ENCODE measurements at regions of chr1 and their contacts with region 1.

Region 1: GRCh38 chr1:32335790-32336590 is at the start of gene MARCKSL1:
- DNase-seq: peak; percentile 85 to 90
- ATAC-seq: peak; percentile 54 to 66 (median 62)
- H3K4me3 ChIP-seq: peak within 1 kb of the TSS; percentile 36
- H3K4me3 Mint-ChIP-seq: peak within 1 kb of the TSS; percentile 88
- H3K27ac ChIP-seq: no peak within 1 kb of the TSS
- H3K27ac Mint-ChIP-seq: peak within 1 kb of the TSS; percentile 43 to 87
- H3K4me1 ChIP-seq: peaks cover 48% of the 10 kb centered on the region
- H3K4me1 Mint-ChIP-seq: peaks cover 24 to 49% of the 10 kb centered on the region in 2 donors
- H3K27me3 ChIP-seq: no peaks in the 10 kb centered on the region
- H3K27me3 Mint-ChIP-seq: peaks cover 0 to 3% of the 10 kb centered on the region in 2 donors
- CTCF ChIP-seq: no peak
- total RNA-seq, gene MARCKSL1: 21.7 to 26.1 (median 21.8) TPM

Region 2: GRCh38 chr1:32221980-32222755 is 113.8 kb before region 1 on chr1 and contains the starts of genes EIF3I and TMEM234:
- intact Hi-C with region 1: loop called (anchors 5 kb)
- DNase-seq: peak; percentile 86 to 97
- ATAC-seq: peak; percentile 89 to 96 (median 93)
- H3K4me3 ChIP-seq: peak within 1 kb of the TSS; percentile 54
- H3K4me3 Mint-ChIP-seq: peak within 1 kb of the TSS; percentile 92
- H3K27ac ChIP-seq: peak within 1 kb of the TSS; percentile 82
- H3K27ac Mint-ChIP-seq: peak within 1 kb of the TSS; percentile 92 to 96
- H3K4me1 ChIP-seq: peaks cover 30% of the 10 kb centered on the region
- H3K4me1 Mint-ChIP-seq: peaks cover 20 to 29% of the 10 kb centered on the region in 2 donors
- H3K27me3 ChIP-seq: no peaks in the 10 kb centered on the region
- H3K27me3 Mint-ChIP-seq: no peaks in the 10 kb centered on the region
- CTCF ChIP-seq: no peak
- total RNA-seq, gene EIF3I: 107 to 126 (median 110) TPM
- total RNA-seq, gene TMEM234: 22.2 to 27.1 (median 24.7) TPM

Region 3: DNA sequence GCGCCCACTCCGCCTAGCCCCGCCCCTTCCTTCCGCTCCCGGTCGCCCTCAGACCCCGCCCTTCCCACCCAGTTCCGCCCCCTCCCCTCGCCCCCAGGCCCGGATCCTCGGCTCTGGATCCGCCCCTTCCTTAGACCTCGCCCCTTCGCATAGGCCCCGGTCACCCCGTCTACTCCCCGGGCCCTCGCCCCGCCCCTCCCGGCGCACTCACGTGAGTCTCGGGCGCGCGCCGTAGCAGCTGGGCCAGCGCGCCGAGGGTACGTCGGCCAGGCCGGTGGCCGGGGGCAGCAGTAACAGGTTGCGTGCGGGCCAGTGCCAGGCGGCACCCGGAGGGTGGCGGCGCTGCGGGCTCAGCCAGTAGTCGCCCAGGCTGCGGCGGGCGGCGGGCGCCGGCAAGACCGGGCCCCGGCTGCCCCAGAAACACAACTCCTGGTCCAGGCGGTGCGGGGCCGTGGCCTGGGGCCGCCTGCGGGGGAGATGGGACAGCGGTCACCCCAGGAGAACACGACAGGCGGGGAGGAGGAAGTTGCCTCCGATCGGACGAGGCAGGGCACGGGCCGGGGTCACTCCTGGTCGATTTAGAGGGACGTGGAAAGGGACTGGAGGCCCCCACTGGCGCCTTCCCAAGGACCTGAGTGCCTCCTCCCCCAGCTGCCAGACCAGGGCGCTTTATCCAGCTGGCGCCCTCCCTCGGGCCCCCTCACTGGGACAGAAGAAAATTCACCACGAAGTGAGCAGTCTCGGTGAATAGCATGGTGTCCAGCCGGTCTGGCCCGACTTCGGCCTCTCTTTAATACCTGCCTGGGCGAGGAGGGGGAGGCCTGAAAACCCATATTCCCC is 15.6 kb after region 1 on chr1:
- intact Hi-C with region 1: loop called (anchors 1 kb)
- DNase-seq: peak; percentile 88 to 97
- ATAC-seq: peak; percentile 93 to 97 (median 94)
- H3K4me3 ChIP-seq: peak overlapping the region; percentile 47
- H3K4me3 Mint-ChIP-seq: peak overlapping the region; percentile 76
- H3K27ac ChIP-seq: peak overlapping the region; percentile 66
- H3K27ac Mint-ChIP-seq: peak overlapping the region; percentile 64 to 72
- H3K4me1 ChIP-seq: peaks cover 39% of the 10 kb centered on the region
- H3K4me1 Mint-ChIP-seq: peaks cover 28 to 50% of the 10 kb centered on the region in 2 donors
- H3K27me3 ChIP-seq: no peaks in the 10 kb centered on the region
- H3K27me3 Mint-ChIP-seq: no peaks in the 10 kb centered on the region
- CTCF ChIP-seq: peak; percentile 0

Region 4: DNA sequence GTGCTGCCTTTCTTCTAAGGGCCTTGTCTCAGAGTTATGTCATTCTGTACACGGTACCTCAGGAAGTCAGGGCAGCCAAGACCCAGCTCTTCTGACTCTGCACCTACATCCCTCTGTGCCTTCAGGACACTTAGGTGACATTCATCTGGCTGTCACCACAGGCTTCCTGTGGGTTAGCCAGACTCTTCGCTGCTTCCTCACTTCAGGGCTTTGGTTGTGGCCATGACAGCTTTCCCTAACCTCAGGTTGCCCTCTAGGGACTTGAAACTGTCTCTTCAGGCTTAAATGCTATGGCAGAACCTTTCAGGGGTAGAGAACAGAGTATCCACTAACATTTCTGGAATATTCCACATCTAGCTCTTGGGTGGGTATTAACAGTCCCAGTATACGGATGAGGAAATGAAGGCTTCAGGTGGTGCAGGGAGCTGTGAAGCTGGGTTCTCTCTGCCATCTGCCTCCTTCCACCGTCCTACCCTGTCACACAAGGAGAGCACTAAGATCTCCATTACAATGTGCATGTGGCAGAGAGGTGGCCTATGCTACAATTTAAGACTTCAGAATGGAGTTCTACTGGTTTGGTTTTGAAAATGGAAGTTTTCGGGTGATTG is 36.3 kb after region 1 on chr1:
- intact Hi-C with region 1: loop called (anchors 1 kb)
- DNase-seq: peak in 1 of 2 donors; percentile 85
- ATAC-seq: peak; percentile 68 to 71 (median 70)
- H3K4me3 ChIP-seq: no peak overlapping the region
- H3K4me3 Mint-ChIP-seq: no peak overlapping the region
- H3K27ac ChIP-seq: no peak overlapping the region
- H3K27ac Mint-ChIP-seq: peak overlapping the region; percentile 68 to 77
- H3K4me1 ChIP-seq: peaks cover 13% of the 10 kb centered on the region
- H3K4me1 Mint-ChIP-seq: peaks cover 12 to 22% of the 10 kb centered on the region in 2 donors
- H3K27me3 ChIP-seq: no peaks in the 10 kb centered on the region
- H3K27me3 Mint-ChIP-seq: no peaks in the 10 kb centered on the region
- CTCF ChIP-seq: no peak

Region 5: DNA sequence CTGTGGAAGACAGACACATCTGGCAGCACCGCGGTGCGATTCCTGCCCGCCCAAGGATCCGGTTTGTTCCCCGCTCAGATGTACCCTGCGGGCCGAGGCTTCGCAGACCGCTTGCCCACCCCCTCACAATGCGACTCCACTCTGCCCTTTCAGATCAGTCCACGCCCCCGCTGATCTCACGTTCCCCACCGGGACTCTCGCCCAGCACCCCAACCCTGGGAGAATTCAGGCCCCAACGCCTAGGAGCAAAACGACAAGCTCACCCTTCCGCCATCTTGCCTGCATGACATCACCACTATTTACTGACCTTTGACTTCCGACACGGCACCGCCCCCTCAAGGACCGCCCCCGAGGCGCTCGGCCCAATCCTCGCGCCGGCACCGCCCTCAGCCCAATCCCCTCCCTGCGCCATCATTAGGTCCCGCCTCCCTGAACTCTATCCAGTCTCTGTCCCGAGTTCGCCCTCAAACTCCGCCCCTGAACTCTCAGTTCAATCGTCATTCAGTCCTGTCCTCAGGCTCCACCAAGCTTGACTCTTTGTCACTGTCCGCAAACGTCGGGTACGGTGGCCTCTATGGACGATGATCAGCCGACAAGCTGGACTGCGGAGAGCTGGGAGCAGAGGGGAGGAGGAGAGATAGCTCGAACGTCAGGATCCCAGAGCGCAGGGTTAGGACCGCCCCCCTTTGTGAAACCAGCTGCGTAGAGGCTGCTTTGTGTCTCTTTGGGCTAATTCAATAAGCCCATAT is 58.3 kb after region 1 on chr1 and contains the start of gene BSDC1:
- intact Hi-C with region 1: loop called (anchors 2 kb)
- DNase-seq: peak; percentile 98 to 99
- ATAC-seq: peak; percentile 96 to 100 (median 97)
- H3K4me3 ChIP-seq: peak within 1 kb of the TSS; percentile 76
- H3K4me3 Mint-ChIP-seq: peak within 1 kb of the TSS; percentile 100
- H3K27ac ChIP-seq: peak within 1 kb of the TSS; percentile 91
- H3K27ac Mint-ChIP-seq: peak within 1 kb of the TSS; percentile 97 to 98
- H3K4me1 ChIP-seq: peaks cover 16% of the 10 kb centered on the region
- H3K4me1 Mint-ChIP-seq: peaks cover 21 to 22% of the 10 kb centered on the region in 2 donors
- H3K27me3 ChIP-seq: no peaks in the 10 kb centered on the region
- H3K27me3 Mint-ChIP-seq: peaks cover 0 to 10% of the 10 kb centered on the region in 2 donors
- CTCF ChIP-seq: no peak
- total RNA-seq, gene BSDC1: 150 to 203 (median 174) TPM

Region 6: DNA sequence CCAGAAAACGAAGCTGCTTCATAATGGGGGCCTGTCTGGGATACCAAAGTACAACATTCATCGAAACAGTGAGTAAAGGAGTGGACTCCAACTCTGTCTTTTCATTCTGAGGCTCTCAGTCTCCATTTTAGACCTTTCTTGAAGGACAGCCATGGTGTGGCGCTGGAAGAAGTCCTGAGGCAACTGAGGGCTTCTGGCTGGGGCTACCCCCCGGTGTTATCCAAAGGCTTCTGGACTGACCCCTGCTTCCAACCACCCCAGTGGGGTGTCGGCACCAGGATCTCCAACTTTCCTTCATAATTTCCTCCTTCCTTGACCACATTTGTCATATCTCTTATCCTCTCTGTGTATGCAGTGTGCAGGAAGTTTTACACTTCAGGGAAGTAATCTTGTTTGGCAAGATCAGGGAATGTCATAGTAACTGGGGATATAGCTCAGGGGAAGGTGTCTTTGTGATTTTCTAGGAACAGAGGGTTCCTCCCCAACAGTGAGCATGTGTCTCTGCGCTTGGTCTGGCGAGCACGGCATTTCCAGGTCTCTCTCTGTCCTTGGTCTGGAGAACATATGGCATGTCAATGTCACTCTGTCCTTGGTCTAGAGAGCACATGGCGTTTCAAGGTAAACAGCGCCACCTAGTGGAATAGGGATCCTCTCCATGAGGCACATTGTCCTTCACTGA is 77.7 kb after region 1 on chr1:
- intact Hi-C with region 1: loop called (anchors 1 kb)
- DNase-seq: peak; percentile 48 to 92
- ATAC-seq: peak; percentile 81 to 85 (median 85)
- H3K4me3 ChIP-seq: no peak overlapping the region
- H3K4me3 Mint-ChIP-seq: no peak overlapping the region
- H3K27ac ChIP-seq: no peak overlapping the region
- H3K27ac Mint-ChIP-seq: no peak overlapping the region
- H3K4me1 ChIP-seq: no peaks in the 10 kb centered on the region
- H3K4me1 Mint-ChIP-seq: peaks cover 0 to 4% of the 10 kb centered on the region in 2 donors
- H3K27me3 ChIP-seq: no peaks in the 10 kb centered on the region
- H3K27me3 Mint-ChIP-seq: peaks cover 8 to 23% of the 10 kb centered on the region in 2 donors
- CTCF ChIP-seq: peak; percentile 90